ENCODE measurements at regions of chr20 and their contacts with region 1.

Region 1: GRCh38 chr20:20593447-20594170 is 118.8 kb downstream of the RALGAPA2 start:
- DNase-seq: peak; percentile 29
- H3K4me3 Mint-ChIP-seq: no peak overlapping the region
- H3K27ac Mint-ChIP-seq: no peak overlapping the region
- H3K4me1 Mint-ChIP-seq: no peaks in the 10 kb centered on the region
- H3K27me3 Mint-ChIP-seq: no peaks in the 10 kb centered on the region

Region 2: DNA sequence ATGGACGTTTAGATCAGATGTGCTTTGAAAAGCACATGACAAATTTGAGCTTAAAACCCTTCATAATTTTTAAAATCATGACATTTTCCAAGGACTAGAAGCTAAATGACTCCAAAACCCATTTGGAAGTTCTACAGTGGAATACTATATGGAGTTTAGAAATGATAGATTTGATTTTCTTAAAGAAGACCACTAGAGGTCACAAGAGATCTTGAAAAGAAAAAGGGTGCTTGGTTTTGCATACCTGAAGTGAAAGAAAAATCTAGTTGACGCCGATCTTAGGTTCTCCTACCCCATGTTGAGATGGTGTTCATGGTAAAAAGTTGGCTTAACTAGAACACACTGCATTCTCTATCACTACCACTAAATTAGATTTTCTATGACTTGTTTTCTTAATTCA is 509.8 kb before region 1 on chr20:
- CTCF ChIA-PET with region 1: interaction called, 36 read pairs
- POLR2A ChIA-PET with region 1: no interaction called
- intact Hi-C with region 1: loop called (anchors 1 kb)
- DNase-seq: no peak
- H3K4me3 Mint-ChIP-seq: no peak overlapping the region
- H3K27ac Mint-ChIP-seq: no peak overlapping the region
- H3K4me1 Mint-ChIP-seq: no peaks in the 10 kb centered on the region
- H3K27me3 Mint-ChIP-seq: peaks cover 11% of the 10 kb centered on the region

Region 3: DNA sequence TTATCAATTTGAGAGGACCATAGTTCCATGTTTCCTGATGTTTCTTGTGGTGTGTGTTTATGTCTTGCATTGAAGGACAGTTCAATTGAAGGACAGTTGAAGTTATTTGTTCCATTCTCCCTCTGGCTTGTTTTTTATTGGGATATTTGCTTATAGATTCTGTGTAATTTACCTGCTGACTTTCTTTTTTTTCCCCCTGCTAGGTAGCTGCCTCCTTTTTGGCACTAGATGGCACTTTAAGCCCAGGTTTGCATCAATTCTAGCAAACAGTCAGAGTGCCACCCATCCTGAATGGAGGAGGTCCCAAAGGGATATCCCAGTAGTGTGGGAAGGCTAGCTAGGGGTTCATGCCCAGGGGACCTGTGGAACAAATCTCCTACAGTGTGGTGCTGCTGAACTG is 463.2 kb before region 1 on chr20:
- CTCF ChIA-PET with region 1: interaction called, 13 read pairs
- POLR2A ChIA-PET with region 1: no interaction called
- intact Hi-C with region 1: loop called (anchors 5 kb)
- DNase-seq: no peak
- H3K4me3 Mint-ChIP-seq: no peak overlapping the region
- H3K27ac Mint-ChIP-seq: no peak overlapping the region
- H3K4me1 Mint-ChIP-seq: no peaks in the 10 kb centered on the region
- H3K27me3 Mint-ChIP-seq: peaks cover 17% of the 10 kb centered on the region

Region 4: GRCh38 chr20:20237093-20237959 is 356.3 kb before region 1 on chr20:
- CTCF ChIA-PET with region 1: interaction called, 12 read pairs
- POLR2A ChIA-PET with region 1: no interaction called
- intact Hi-C with region 1: no loop called
- DNase-seq: peak; percentile 43
- H3K4me3 Mint-ChIP-seq: no peak overlapping the region
- H3K27ac Mint-ChIP-seq: no peak overlapping the region
- H3K4me1 Mint-ChIP-seq: no peaks in the 10 kb centered on the region
- H3K27me3 Mint-ChIP-seq: peaks cover 3% of the 10 kb centered on the region

Region 5: DNA sequence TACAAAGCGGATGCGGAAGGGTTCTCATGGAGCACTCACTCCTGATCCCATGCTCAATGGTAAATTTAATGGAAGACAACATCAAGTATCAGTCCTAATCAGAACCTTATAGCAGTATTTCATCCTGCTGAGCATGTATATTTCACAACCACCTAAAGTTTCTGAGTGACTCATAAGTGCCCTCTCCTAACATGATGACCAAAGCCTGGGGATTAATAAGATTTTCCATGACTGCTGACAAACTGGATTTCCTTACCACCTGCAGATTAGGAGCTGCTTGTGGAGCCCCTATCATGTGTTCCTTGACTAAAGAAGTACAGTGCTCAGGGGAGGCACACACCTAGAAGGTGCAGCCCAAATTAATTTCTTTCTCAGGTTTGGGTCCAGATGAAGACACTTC is 112.9 kb before region 1 on chr20:
- CTCF ChIA-PET with region 1: no interaction called
- POLR2A ChIA-PET with region 1: no interaction called
- intact Hi-C with region 1: no loop called
- DNase-seq: no peak
- H3K4me3 Mint-ChIP-seq: no peak overlapping the region
- H3K27ac Mint-ChIP-seq: peak overlapping the region; percentile 52
- H3K4me1 Mint-ChIP-seq: peaks cover 46% of the 10 kb centered on the region
- H3K27me3 Mint-ChIP-seq: no peaks in the 10 kb centered on the region

Measured in activated CD4-positive, alpha-beta memory T cell treated with anti-CD3 and anti-CD28 coated beads for 36 hours (primary cell).